ENCODE measurements at regions of chr2 and their contacts with region 1.

Region 1: DNA sequence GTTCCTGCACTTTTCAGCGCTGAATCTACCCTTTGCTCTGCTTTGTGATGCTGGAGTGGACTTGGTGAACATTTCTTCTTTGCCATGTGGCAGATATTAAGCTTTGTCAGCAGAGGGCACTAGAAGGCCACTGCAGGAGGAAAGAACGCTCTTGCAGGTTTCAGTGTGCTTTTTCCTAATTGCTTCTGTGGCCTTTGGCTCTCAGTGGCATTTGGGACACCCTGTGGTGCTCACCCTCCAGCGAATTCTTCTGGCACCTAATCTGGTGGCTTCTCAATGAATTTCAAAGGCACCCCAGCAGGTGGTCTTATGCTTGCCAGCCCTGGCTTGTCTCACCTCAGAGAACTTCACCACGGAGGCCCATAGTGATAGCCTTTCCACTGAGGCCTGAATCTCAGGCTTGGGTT is 146.7 kb downstream of the MYO3B start:
- DNase-seq: peak; percentile 24
- H3K4me3 ChIP-seq: peak overlapping the region in 1 of 2 experiments; percentile 31; a peak in 1 of 4 replicates
- H3K27ac ChIP-seq: no peak overlapping the region
- H3K4me1 ChIP-seq: no peaks in the 10 kb centered on the region
- H3K27me3 ChIP-seq: no peaks in the 10 kb centered on the region
- CTCF ChIP-seq: peak; percentile 62
- EP300 ChIP-seq: no peak
- RAD21 ChIP-seq: peak; percentile 83

Region 2: DNA sequence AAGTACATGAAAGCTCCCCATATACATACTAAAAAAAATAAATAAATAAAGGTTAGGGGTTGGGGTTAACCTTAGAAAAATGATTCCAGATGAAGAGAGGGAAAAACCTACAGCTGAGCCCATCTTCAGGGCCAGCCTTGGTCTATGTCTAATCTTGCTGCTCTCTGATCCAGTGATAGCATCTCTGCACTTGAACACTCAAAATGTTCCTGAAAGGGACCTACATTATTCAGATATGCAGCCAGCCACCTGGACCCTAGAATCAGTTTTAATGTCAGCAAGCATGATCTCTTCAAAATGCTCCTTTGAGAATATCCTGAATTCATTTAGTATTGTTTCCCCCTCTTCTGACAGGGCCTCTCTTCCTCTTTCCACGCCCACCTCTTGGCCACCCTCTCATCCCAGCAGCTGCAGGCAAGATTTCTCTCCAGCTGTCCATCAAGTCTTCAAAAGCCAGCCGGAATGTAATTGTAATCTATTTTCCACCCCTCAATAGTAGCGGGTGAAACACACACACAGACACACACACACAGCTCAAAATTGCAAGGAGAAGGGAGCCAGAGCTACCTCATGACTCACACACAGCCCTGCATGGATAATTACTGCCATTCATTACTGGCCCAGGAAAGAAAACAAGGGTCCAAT is 11.2 kb before region 1 on chr2:
- CTCF ChIA-PET with region 1: interaction called, 27 read pairs
- POLR2A ChIA-PET with region 1: no interaction called
- DNase-seq: no peak
- H3K4me3 ChIP-seq: no peak overlapping the region
- H3K27ac ChIP-seq: no peak overlapping the region
- H3K4me1 ChIP-seq: no peaks in the 10 kb centered on the region
- H3K27me3 ChIP-seq: no peaks in the 10 kb centered on the region
- CTCF ChIP-seq: no peak
- EP300 ChIP-seq: no peak
- RAD21 ChIP-seq: no peak

Region 3: DNA sequence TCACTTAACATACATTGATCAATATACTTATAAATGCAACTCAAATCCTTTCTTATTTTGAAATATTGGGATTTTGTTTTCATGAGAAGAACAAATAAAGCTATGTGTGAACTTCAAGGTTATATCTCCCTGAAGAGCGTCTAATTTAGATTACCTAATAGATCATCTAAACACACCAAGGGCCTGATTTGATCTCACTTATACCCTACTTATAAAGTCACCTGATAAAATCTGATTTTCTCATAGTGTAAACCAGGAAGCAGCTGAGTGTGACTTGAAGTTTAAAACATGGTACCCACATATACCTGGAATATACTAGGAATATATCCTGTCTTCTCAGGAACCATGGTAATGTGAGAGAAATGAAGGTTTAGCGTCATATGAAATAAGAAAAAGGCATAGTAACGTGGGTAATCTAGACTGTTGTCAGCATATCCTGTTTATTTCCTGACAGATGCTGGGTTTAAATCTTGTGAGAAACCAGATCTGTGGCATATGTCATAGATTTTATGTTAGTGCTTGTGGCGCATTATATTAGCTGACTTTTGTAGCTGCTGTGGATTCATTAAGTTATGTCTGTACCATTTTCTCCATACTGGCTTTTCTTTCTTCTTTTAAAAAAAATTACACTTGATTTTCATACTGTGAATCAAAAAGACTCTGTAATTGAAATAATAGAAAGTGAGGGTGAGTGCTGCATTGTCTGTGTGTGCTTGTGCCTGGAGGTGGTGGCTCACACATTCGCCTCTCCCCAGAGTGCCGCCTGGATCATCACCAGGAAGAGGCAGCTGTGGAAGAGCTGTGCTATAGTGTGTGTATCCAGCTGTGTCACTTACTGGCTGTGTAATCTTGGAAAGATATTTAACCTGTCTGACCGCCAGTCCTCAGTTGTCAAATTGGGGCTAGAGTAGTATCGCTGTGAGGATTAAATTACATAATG is 17.3 kb after region 1 on chr2:
- CTCF ChIA-PET with region 1: interaction called, 17 read pairs
- POLR2A ChIA-PET with region 1: no interaction called
- DNase-seq: no peak
- H3K4me3 ChIP-seq: no peak overlapping the region
- H3K27ac ChIP-seq: no peak overlapping the region
- H3K4me1 ChIP-seq: no peaks in the 10 kb centered on the region; a peak in 1 of 4 replicates
- H3K27me3 ChIP-seq: no peaks in the 10 kb centered on the region
- CTCF ChIP-seq: no peak
- EP300 ChIP-seq: no peak
- RAD21 ChIP-seq: no peak

Measured in SK-N-SH (cell line).